ENCODE measurements at regions of chr11 and their contacts with region 1.

Region 1: DNA sequence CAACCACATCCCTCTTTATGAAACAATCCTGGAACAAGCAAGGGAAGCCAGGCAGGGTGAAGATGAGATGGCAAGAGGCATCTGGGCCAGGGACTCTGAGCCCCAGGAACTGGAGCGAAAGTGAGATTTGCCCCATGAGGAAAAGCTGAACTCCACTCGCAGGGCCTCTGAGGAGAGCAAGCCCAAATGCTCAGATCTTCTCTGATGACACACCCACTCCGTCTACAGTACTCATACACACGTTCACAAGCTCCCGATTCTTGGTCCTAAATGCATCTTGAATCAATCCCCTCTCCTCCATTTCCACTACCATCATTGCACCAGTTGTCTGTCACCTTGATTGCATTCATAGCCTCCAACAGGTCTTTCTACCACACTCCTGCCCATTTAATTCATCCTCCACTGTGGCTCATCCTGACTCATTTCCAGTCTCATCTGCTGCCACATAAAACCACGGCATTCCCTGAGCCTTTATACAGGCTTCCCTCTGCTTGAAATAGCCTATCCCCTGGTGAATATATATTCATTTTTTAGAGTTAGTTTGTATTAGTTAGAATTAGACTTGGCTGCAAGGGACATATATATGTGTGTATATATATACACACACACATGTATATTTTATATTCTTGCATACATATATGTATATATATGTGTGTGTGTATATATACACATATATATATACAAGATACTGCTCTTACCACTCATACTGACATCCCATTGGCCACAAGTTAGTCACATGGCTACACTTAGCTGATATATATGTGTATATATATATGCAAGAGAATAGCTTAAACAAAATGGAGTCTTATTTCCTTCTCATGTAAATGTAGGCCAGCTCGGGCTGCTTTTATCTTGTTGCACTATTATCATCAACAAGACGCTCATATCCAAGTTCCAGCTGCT is 1.4 kb upstream of the APOA5 start:
- DNase-seq: no peak
- ATAC-seq: no peak
- H3K4me3 ChIP-seq: peak overlapping the region; percentile 1 to 83 (median 5); a peak in 2 of 6 replicates
- H3K27ac ChIP-seq: peak overlapping the region; percentile 87
- H3K4me1 ChIP-seq: peaks cover 93% of the 10 kb centered on the region
- H3K27me3 ChIP-seq: no peaks in the 10 kb centered on the region; a peak in 1 of 5 replicates
- CTCF ChIP-seq: no peak
- EP300 ChIP-seq: no peak
- POLR2A ChIP-seq: no peak
- RAD21 ChIP-seq: no peak

Region 2: GRCh38 chr11:116808386-116809194 is 15.5 kb after region 1 on chr11:
- CTCF ChIA-PET with region 1: no interaction called
- POLR2A ChIA-PET with region 1: interaction called, 291 read pairs
- in situ Hi-C with region 1: no loop called
- intact Hi-C with region 1: loop called (anchors 1 kb)
- DNase-seq: peak; percentile 98
- ATAC-seq: peak; percentile 90
- H3K4me3 ChIP-seq: peak overlapping the region; percentile 20 to 62 (median 31); a peak in 5 of 6 replicates
- H3K27ac ChIP-seq: peak overlapping the region; percentile 98
- H3K4me1 ChIP-seq: peaks cover 87% of the 10 kb centered on the region
- H3K27me3 ChIP-seq: no peaks in the 10 kb centered on the region
- CTCF ChIP-seq: no peak
- EP300 ChIP-seq: peak; percentile 97 to 99
- POLR2A ChIP-seq: peak; percentile 68 to 82; a peak in 2 of 4 replicates
- RAD21 ChIP-seq: no peak

Region 3: DNA sequence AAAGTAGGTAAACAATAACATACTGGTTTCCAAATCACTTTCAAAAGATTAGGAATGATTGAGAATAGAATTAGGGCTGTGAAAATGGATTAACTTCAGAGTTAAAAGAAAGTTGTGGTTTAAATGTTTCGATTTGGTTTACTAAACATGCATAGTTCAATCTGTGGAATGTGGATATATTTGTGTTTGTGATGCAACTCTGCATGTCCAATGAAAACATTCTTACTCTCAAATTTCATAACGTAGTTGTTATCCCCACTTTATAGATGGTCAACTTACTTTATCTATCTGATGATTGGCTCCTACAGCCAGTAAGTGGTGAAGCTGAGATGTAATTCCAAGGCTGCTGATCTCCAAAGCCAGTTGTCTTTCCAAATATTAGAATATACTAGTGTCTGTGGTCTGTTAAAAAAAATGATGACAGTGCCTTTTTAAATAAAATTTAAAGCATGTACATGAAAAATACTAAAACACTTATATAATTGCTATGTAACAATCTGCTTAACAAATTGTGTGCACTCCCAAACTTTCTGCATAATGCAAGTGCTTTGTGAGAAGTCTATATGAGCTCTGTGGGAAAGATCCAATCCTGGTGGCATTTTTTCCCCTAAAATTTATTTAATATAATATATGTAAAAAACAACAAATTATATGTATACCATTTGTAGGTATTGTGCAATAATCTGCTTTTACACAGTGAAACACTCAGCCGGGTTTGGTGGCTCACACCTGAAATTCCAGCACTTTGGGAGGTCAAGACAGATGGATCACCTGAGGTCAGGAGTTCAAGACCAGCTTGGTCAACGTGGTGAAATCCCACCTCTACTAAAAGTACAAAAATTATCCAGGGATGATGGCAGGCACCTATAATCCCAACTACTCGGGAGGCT is 314.8 kb after region 1 on chr11:
- CTCF ChIA-PET with region 1: interaction called, 4 read pairs
- POLR2A ChIA-PET with region 1: interaction called, 3 read pairs
- in situ Hi-C with region 1: no loop called
- intact Hi-C with region 1: loop called (anchors 1 kb)
- DNase-seq: no peak
- ATAC-seq: no peak
- H3K4me3 ChIP-seq: no peak overlapping the region; a peak in 1 of 6 replicates
- H3K27ac ChIP-seq: no peak overlapping the region
- H3K4me1 ChIP-seq: peaks cover 15% of the 10 kb centered on the region
- H3K27me3 ChIP-seq: no peaks in the 10 kb centered on the region
- CTCF ChIP-seq: no peak
- EP300 ChIP-seq: no peak
- POLR2A ChIP-seq: no peak
- RAD21 ChIP-seq: no peak

Measured in HepG2 (cell line).